ENCODE measurements at regions of chr11 and their contacts with region 1.

Region 1: GRCh38 chr11:46410021-46410420 is 18.4 kb upstream of the CHRM4 start:
- DNase-seq: no peak
- ATAC-seq: no peak
- H3K4me3 Mint-ChIP-seq: no peak overlapping the region
- H3K27ac Mint-ChIP-seq: no peak overlapping the region
- H3K4me1 Mint-ChIP-seq: no peaks in the 10 kb centered on the region
- H3K27me3 Mint-ChIP-seq: no peaks in the 10 kb centered on the region
- CTCF ChIP-seq: no peak

Region 2: GRCh38 chr11:46387919-46388618 is 22.0 kb before region 1 on chr11:
- CTCF ChIA-PET with region 1: no interaction called
- POLR2A ChIA-PET with region 1: no interaction called
- intact Hi-C with region 1: no loop called
- DNase-seq: no peak
- ATAC-seq: no peak
- H3K4me3 Mint-ChIP-seq: no peak overlapping the region
- H3K27ac Mint-ChIP-seq: no peak overlapping the region
- H3K4me1 Mint-ChIP-seq: peaks cover 19% of the 10 kb centered on the region
- H3K27me3 Mint-ChIP-seq: peaks cover 63% of the 10 kb centered on the region
- CTCF ChIP-seq: no peak

Region 3: GRCh38 chr11:46445920-46446771 is 36.1 kb after region 1 on chr11:
- CTCF ChIA-PET with region 1: no interaction called
- POLR2A ChIA-PET with region 1: no interaction called
- intact Hi-C with region 1: no loop called
- DNase-seq: no peak
- ATAC-seq: no peak
- H3K4me3 Mint-ChIP-seq: no peak overlapping the region
- H3K27ac Mint-ChIP-seq: no peak overlapping the region
- H3K4me1 Mint-ChIP-seq: peaks cover 7% of the 10 kb centered on the region
- H3K27me3 Mint-ChIP-seq: no peaks in the 10 kb centered on the region
- CTCF ChIP-seq: no peak

Region 4: GRCh38 chr11:46513934-46514342 is 103.9 kb after region 1 on chr11:
- CTCF ChIA-PET with region 1: no interaction called
- POLR2A ChIA-PET with region 1: interaction called, 13 read pairs
- intact Hi-C with region 1: no loop called
- DNase-seq: no peak
- ATAC-seq: no peak
- H3K4me3 Mint-ChIP-seq: no peak overlapping the region
- H3K27ac Mint-ChIP-seq: no peak overlapping the region
- H3K4me1 Mint-ChIP-seq: peaks cover 1% of the 10 kb centered on the region
- H3K27me3 Mint-ChIP-seq: no peaks in the 10 kb centered on the region
- CTCF ChIP-seq: no peak

Region 5: DNA sequence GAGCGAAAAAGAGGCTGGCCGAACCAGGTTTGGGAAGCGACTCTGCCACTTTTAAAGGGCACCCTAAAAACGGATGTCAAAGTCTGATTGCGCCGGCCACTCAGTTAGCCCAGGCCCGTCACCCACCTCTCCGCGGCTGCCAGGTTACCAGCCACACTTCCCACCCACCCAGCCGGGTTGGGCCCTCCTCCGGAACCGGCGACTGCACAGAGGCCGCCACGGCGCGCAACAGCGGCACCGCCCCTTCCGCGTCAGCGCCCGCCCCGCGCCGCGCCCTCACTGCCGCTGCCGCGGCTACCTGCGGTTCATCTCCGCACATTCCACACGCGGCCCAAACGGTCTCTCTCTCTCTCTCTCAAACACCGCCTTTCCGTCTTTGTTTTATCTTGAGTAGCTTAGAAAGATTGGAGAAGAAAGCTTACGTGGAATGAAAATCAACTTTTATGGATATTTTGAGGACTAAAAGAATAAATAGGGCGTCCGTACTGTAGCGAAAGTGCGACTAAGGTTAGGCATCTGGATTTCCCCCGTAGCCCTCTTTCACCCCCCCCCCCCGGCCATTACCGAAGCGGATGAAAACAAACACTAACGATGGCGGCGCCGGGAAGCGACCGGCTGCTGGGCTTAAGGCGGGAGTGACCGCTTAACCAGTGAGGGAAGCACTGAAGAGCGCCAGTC is 207.1 kb after region 1 on chr11 and contains the starts of genes ATG13 and HARBI1:
- CTCF ChIA-PET with region 1: no interaction called
- POLR2A ChIA-PET with region 1: no interaction called
- intact Hi-C with region 1: no loop called
- DNase-seq: peak; percentile 91
- ATAC-seq: peak; percentile 94
- H3K4me3 Mint-ChIP-seq: peak within 1 kb of the TSS; percentile 93
- H3K27ac Mint-ChIP-seq: peak within 1 kb of the TSS; percentile 100
- H3K4me1 Mint-ChIP-seq: peaks cover 30% of the 10 kb centered on the region
- H3K27me3 Mint-ChIP-seq: no peaks in the 10 kb centered on the region
- CTCF ChIP-seq: no peak
- total RNA-seq, gene ATG13: 49.1 and 73.7 TPM in 2 replicates
- total RNA-seq, gene HARBI1: 5.4 and 6.5 TPM in 2 replicates

Measured in activated B cell treated with CpG ODN at 0.5 μM for 24 hours (primary cell).